Heart right ventricle (tissue), 16 donors: ENCODE measurements at regions of chr21 and their contacts with region 1.

Region 1: GRCh38 chr21:34020005-34020847 is 53.2 kb upstream of the MRPS6 start:
- DNase-seq: no peak
- ATAC-seq: peak in 6 of 8 donors; percentile 29 to 81 (median 60)
- H3K4me3 ChIP-seq: no peak overlapping the region
- H3K27ac ChIP-seq: peak overlapping the region in 1 of 10 donors; percentile 48
- H3K4me1 ChIP-seq: peaks cover 0 to 59% (median 3%) of the 10 kb centered on the region in 9 donors
- H3K27me3 ChIP-seq: no peaks in the 10 kb centered on the region
- CTCF ChIP-seq: no peak

Region 2: GRCh38 chr21:33734291-33734690 is 285.9 kb before region 1 on chr21:
- intact Hi-C with region 1: no loop called
- DNase-seq: no peak
- ATAC-seq: no peak
- H3K4me3 ChIP-seq: no peak overlapping the region
- H3K27ac ChIP-seq: no peak overlapping the region
- H3K4me1 ChIP-seq: peaks cover 0 to 2% (median 0%) of the 10 kb centered on the region in 9 donors
- H3K27me3 ChIP-seq: no peaks in the 10 kb centered on the region
- CTCF ChIP-seq: no peak

Region 3: DNA sequence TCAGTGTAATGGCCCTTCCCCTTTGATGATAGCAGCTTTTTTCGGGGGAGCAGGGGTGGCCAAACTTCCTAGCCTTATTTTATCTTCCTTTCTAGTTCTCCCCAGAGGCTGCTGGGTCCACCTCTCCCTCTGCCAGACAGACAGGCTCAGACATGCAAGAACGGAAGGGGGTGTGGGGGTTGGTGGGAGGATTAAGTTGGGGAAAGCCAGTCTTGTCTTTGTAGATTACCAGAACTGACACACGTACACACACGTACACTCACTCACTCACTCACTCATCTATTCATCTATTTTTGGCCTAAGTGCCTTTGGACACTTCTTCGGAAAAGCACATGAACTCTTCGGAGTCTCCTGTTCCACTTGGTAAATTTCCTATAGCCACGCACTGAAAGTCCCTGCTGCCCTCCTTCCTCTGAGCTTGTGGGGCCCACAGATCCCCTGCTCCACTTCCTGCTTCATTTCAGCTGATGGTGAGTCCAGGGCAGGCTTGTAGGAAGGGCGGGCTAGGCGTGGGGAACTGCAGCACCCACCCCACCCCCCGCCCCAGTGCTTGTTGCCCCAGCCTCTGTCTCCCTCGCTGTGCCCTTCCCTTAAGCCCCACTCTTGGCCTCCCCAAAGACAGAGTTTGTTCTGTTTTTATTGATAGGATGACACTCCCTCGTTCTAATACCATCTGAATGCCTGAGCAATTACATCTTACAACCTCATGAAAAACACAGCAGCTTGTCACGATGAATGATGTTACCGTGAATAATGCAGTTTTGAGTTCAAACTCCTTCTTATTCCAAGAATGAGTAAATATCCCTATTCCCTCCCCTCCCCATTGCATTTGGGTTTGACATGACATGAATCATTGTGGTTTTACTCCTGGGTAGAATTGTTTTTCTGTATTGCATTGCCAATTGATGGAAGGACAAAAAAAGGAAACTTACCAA is 43.9 kb before region 1 on chr21:
- intact Hi-C with region 1: loop called in 1 of 10 experiments (anchors 5 kb)
- DNase-seq: peak; percentile 34 to 35
- ATAC-seq: peak; percentile 69 to 92 (median 78)
- H3K4me3 ChIP-seq: peak overlapping the region in 4 of 10 donors; percentile 10 to 22 (median 20)
- H3K27ac ChIP-seq: peak overlapping the region; percentile 28 to 91 (median 76)
- H3K4me1 ChIP-seq: peaks cover 0 to 40% (median 10%) of the 10 kb centered on the region in 9 donors
- H3K27me3 ChIP-seq: no peaks in the 10 kb centered on the region
- CTCF ChIP-seq: no peak

Region 4: DNA sequence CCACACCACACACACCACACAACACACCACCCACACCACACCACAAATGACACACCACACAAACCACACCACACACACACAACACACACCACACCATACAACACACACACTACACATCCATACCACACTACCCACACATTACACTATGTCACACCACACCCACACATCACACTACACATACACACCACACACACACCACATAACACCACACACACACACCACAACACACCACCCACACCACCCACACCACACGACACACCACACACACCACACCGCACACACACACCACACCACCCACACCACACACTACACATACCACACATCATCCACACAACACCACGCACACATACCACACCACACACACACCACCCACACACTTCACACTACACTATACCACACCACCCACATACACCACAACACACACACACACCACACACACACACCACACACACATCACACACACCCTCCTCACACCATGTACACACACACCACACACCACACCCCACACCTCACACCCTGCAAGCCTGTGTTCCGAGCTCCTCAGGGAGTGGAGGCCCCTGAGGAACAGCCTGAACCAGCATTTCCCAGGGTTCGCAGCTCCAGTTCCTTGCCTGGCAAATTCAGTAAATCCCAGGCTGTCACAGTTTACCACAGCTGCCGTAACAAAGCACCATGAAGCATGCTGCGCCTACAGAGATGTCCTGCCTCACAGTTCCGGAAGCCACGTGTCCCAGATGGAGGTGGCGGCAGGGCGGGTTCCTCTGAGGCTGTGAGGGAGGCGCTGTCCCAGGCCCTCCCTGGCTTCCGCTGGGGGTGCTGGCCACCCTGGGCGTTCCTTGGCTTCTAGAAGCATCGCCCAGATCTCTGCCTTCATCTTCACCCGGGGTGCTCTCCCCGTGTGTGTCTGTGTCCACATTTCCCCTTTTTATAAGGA is 34.8 kb before region 1 on chr21:
- intact Hi-C with region 1: loop called in 1 of 10 experiments (anchors 2 kb)
- DNase-seq: no peak
- ATAC-seq: no peak
- H3K4me3 ChIP-seq: no peak overlapping the region
- H3K27ac ChIP-seq: no peak overlapping the region
- H3K4me1 ChIP-seq: peaks cover 0 to 5% (median 0%) of the 10 kb centered on the region in 9 donors
- H3K27me3 ChIP-seq: no peaks in the 10 kb centered on the region
- CTCF ChIP-seq: no peak

Region 5: GRCh38 chr21:34133802-34134201 is 113.6 kb after region 1 on chr21:
- intact Hi-C with region 1: no loop called
- DNase-seq: no peak
- ATAC-seq: no peak
- H3K4me3 ChIP-seq: no peak overlapping the region
- H3K27ac ChIP-seq: no peak overlapping the region
- H3K4me1 ChIP-seq: peaks cover 3 to 55% (median 50%) of the 10 kb centered on the region in 9 donors
- H3K27me3 ChIP-seq: no peaks in the 10 kb centered on the region
- CTCF ChIP-seq: peak in 1 of 9 donors; percentile 25

Region 6: GRCh38 chr21:34166468-34166867 is 146.2 kb after region 1 on chr21:
- intact Hi-C with region 1: no loop called
- DNase-seq: no peak
- ATAC-seq: no peak
- H3K4me3 ChIP-seq: no peak overlapping the region
- H3K27ac ChIP-seq: no peak overlapping the region
- H3K4me1 ChIP-seq: no peaks in the 10 kb centered on the region
- H3K27me3 ChIP-seq: no peaks in the 10 kb centered on the region
- CTCF ChIP-seq: no peak

Region 7: DNA sequence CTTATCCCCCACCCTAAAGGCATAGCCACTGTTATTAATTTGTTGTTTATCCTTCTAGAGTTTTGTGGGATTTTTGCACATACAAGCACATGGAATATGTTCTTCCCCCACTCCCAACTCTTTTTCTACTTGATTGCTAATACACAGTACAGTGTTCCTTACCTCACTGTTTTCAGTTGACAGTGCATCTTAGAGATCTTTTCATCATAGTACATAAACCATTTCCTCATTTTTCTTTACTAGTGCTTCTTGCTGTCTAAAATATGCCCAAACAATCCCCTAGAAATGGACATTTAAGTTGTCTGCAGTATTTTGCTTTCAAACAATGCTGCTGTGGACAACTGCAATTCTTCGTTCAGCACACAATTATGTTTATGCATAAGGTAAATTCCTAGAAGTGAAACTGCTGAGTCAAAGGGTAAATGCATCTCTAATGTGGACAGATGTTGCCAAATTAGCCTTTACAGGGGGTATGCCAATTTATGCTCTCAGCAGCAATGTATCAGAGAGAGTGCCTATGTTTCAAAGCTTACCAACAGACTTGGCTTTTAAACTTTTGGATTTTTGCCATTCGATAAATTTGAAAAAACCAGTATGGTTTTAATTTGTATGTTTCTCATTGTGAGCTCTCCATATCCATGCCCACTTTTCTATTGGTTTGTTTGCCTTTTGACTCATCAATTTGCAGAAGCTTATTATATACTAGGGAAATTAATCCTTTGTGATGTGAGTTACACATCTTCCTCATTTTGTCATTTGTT is 185.8 kb after region 1 on chr21:
- intact Hi-C with region 1: no loop called
- DNase-seq: no peak
- ATAC-seq: no peak
- H3K4me3 ChIP-seq: no peak overlapping the region
- H3K27ac ChIP-seq: no peak overlapping the region
- H3K4me1 ChIP-seq: peaks cover 0 to 49% (median 15%) of the 10 kb centered on the region in 9 donors
- H3K27me3 ChIP-seq: no peaks in the 10 kb centered on the region
- CTCF ChIP-seq: no peak